MCF 10A (cell line): ENCODE measurements at regions of chr1 and their contacts with region 1.

Region 1: DNA sequence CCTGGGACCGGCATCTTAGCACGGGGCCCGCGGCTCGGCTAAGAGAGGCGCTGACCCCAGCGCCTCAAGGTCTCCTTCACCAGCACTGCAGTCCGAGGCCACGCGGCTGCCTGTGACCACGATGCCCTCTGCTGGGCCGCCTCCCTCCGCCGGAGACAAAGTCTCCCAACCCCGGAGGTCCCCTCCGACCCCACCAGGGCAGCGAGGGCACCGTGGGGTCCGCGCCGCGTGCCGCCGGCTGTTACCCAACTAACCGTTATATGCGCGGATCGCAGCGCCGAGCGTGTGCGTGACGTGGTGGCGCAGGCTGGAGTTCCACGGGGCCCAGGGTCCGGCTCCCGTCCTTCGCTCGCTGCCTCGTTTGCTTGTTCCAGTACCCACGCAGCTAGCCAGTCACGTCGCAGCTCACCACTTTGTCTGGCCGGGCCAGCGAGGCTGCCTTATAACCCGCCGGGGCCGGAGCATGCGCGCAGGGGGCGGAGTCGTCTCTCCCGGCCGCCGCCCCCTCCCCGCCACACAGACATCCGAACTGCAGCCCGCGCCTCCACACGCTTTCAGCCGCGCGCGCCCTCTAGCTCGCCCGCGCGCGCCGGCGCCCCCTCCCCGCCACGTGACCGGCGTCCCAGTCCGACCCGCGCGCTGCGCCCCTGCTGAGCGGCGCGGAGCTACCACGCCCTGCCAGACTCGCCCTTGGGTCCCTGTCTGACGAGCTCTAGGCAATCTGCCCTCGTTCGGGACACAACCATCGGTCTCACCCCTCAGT is at the start of gene SLC16A1:
- DNase-seq: peak; percentile 93
- H3K4me3 Mint-ChIP-seq: peak within 1 kb of the TSS; percentile 78
- H3K27ac Mint-ChIP-seq: peak within 1 kb of the TSS; percentile 91
- H3K4me1 Mint-ChIP-seq: peaks cover 48% of the 10 kb centered on the region
- H3K27me3 Mint-ChIP-seq: no peaks in the 10 kb centered on the region
- CTCF ChIP-seq: peak; percentile 15
- total RNA-seq, gene SLC16A1: 142 and 148 TPM in 2 replicates

Region 2: GRCh38 chr1:112809253-112809684 is 146.7 kb before region 1 on chr1:
- CTCF ChIA-PET with region 1: interaction called, 5 read pairs
- POLR2A ChIA-PET with region 1: interaction called, 8 read pairs
- intact Hi-C with region 1: loop called (anchors 1 kb)
- DNase-seq: peak; percentile 80
- H3K4me3 Mint-ChIP-seq: no peak overlapping the region
- H3K27ac Mint-ChIP-seq: no peak overlapping the region
- H3K4me1 Mint-ChIP-seq: peaks cover 5% of the 10 kb centered on the region
- H3K27me3 Mint-ChIP-seq: no peaks in the 10 kb centered on the region
- CTCF ChIP-seq: peak; percentile 82

Region 3: GRCh38 chr1:112911506-112911905 is 44.5 kb before region 1 on chr1:
- CTCF ChIA-PET with region 1: interaction called, 3 read pairs
- POLR2A ChIA-PET with region 1: interaction called, 55 read pairs
- intact Hi-C with region 1: loop called (anchors 5 kb)
- DNase-seq: no peak
- H3K4me3 Mint-ChIP-seq: no peak overlapping the region
- H3K27ac Mint-ChIP-seq: no peak overlapping the region
- H3K4me1 Mint-ChIP-seq: peaks cover 14% of the 10 kb centered on the region
- H3K27me3 Mint-ChIP-seq: no peaks in the 10 kb centered on the region
- CTCF ChIP-seq: no peak

Region 4: DNA sequence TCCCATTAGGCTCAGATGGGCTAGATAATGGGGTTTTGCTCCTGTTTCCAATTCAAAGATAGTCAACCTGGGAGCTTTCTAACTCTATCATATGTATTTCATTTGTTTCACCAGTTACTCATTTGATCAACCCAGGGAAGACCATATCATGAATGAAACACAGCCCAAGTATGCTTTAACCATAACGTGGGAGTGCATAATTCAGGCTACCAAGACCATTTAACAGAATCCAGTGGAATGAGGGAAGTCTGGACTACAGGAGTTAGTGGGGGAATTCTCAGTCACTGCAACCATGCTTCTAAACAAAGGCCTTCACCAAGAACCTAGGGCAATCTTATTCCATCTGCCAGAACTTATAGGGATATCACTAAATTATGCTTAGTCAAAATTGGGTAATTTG is 15.0 kb after region 1 on chr1:
- CTCF ChIA-PET with region 1: interaction called, 4 read pairs
- POLR2A ChIA-PET with region 1: interaction called, 15 read pairs
- intact Hi-C with region 1: no loop called
- DNase-seq: no peak
- H3K4me3 Mint-ChIP-seq: no peak overlapping the region
- H3K27ac Mint-ChIP-seq: no peak overlapping the region
- H3K4me1 Mint-ChIP-seq: no peaks in the 10 kb centered on the region
- H3K27me3 Mint-ChIP-seq: no peaks in the 10 kb centered on the region
- CTCF ChIP-seq: no peak

Region 5: DNA sequence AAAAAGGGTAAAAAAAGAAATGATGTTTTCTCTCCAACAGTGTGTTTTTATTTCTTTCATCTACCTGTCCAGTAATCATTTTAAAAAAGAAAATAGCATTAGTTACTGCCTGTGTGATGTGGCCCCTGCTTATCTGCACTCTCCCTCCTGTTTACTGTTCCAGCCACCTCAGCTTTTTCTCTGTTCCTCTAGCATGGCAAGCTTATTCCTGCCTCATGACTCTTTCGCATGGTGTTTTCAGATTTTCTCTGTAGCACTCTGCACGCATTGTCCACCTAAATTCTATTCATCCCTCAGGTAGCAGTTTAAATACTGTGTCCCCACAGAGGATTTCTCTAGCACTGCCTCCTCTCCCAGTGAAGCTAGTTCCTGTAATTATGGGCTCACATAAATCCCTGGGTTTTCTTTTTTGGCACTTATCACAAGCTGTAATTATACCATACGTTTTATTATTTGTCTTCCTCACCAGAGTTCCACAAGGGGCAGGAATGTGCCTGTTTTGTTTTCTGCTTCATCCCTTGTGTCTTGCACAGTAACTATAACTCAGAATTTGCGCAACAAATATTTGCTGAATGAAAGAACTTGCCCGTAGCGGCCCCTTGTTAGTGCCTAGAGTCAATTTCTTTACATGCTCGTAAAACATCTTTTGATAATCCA is 65.6 kb after region 1 on chr1:
- CTCF ChIA-PET with region 1: no interaction called
- POLR2A ChIA-PET with region 1: interaction called, 17 read pairs
- intact Hi-C with region 1: no loop called
- DNase-seq: peak; percentile 86
- H3K4me3 Mint-ChIP-seq: peak overlapping the region; percentile 32
- H3K27ac Mint-ChIP-seq: peak overlapping the region; percentile 90
- H3K4me1 Mint-ChIP-seq: peaks cover 10% of the 10 kb centered on the region
- H3K27me3 Mint-ChIP-seq: no peaks in the 10 kb centered on the region
- CTCF ChIP-seq: no peak

Region 6: GRCh38 chr1:113072757-113073478 is 117.0 kb after region 1 on chr1 and contains the start of gene LRIG2:
- CTCF ChIA-PET with region 1: interaction called, 11 read pairs
- POLR2A ChIA-PET with region 1: interaction called, 19 read pairs
- intact Hi-C with region 1: no loop called
- DNase-seq: peak; percentile 99
- H3K4me3 Mint-ChIP-seq: peak within 1 kb of the TSS; percentile 92
- H3K27ac Mint-ChIP-seq: peak within 1 kb of the TSS; percentile 96
- H3K4me1 Mint-ChIP-seq: peaks cover 15% of the 10 kb centered on the region
- H3K27me3 Mint-ChIP-seq: no peaks in the 10 kb centered on the region
- CTCF ChIP-seq: peak; percentile 88
- total RNA-seq, gene LRIG2: 11.8 and 14.8 TPM in 2 replicates